ENCODE measurements at regions of chr7 and their contacts with region 1.

Region 1: GRCh38 chr7:155738652-155739537 is 73.4 kb downstream of the SHH start:
- DNase-seq: peak; percentile 40 to 80 (median 60)
- ATAC-seq: peak; percentile 93
- H3K4me3 ChIP-seq: no peak overlapping the region
- H3K4me3 Mint-ChIP-seq: peak overlapping the region; percentile 26
- H3K27ac ChIP-seq: no peak overlapping the region
- H3K27ac Mint-ChIP-seq: peak overlapping the region; percentile 64
- H3K4me1 ChIP-seq: peaks cover 10% of the 10 kb centered on the region
- H3K4me1 Mint-ChIP-seq: peaks cover 65% of the 10 kb centered on the region
- H3K27me3 ChIP-seq: no peaks in the 10 kb centered on the region
- H3K27me3 Mint-ChIP-seq: no peaks in the 10 kb centered on the region
- CTCF ChIP-seq: peak; percentile 67

Region 2: DNA sequence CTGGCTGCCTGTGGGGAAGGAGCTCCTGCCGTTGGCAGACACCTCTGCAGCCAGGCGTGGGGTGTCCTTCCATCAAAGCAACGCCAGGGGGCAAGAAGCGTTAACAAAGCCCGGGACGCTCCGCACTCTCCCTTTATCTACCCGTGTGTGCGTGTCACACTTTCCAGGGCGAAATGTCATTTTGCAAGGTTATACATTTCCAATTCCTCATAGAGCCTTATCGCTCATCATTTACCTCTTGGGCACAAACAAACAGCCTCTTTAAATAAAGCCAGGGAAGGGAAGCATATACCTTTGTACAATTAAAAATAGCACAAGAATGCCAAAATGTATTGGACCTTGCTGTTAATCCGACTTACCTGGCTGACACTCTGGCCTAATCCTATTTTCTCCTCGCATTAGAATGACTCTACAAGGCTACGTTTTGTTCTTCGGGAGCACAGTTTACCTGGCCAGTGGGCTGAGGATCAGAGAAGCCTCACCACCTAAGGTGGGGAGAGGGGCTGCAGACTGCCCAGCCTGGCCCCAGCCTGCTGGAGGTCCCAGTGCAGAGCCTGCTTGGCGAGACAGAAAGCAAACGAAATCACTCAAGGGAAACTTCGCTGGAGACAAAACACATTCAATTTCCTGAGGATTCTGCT is 358.6 kb before region 1 on chr7:
- CTCF ChIA-PET with region 1: no interaction called
- POLR2A ChIA-PET with region 1: no interaction called
- intact Hi-C with region 1: loop called in 1 of 2 experiments (anchors 2 kb)
- DNase-seq: peak; percentile 32 to 77 (median 50)
- ATAC-seq: peak; percentile 92
- H3K4me3 ChIP-seq: no peak overlapping the region
- H3K4me3 Mint-ChIP-seq: peak overlapping the region; percentile 23
- H3K27ac ChIP-seq: no peak overlapping the region
- H3K27ac Mint-ChIP-seq: no peak overlapping the region
- H3K4me1 ChIP-seq: peaks cover 27% of the 10 kb centered on the region
- H3K4me1 Mint-ChIP-seq: peaks cover 32% of the 10 kb centered on the region
- H3K27me3 ChIP-seq: peaks cover 69 to 94% of the 10 kb centered on the region in 2 experiments
- H3K27me3 Mint-ChIP-seq: peaks cover 94% of the 10 kb centered on the region
- CTCF ChIP-seq: peak; percentile 69

Region 3: DNA sequence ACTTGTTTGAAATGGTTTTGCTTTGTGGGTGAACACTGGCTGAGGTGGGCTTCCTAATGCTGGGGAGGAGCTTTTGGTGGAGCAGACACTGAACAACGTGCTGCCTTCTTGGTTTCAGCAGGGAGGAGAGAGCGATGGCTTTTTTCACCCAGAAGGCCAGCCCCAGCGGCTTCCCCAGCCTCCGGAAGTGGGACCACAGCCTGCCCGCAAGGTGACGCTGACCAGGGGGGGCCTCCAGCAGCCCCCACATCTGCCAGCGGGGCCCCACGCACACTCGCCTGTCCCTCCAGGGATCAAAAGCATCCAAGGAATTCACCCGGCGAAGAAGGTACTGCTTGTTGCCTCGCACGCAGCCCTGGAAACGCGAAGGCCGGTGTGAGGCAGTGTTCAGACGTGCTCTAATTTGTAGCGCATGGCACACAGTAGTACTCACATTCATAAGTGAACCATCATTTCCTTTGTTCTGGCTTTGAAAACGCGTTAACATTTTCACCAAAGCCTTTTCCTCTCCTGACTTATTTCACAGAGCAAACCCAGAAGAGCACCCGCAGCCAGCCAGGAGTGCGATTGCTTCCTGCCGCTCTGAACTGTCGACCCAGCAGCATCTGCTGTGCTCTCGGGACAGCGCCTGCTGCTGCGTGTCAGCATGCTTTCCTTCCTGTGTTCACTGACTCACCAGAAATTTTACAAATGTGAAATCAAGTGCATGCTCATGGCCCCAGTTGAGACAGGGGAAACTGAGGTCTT is 25.0 kb after region 1 on chr7:
- CTCF ChIA-PET with region 1: no interaction called
- POLR2A ChIA-PET with region 1: no interaction called
- intact Hi-C with region 1: loop called in 1 of 2 experiments (anchors 1 kb)
- DNase-seq: peak; percentile 24 to 79 (median 48)
- ATAC-seq: peak; percentile 85
- H3K4me3 ChIP-seq: peak overlapping the region; percentile 18
- H3K4me3 Mint-ChIP-seq: peak overlapping the region; percentile 84
- H3K27ac ChIP-seq: peak overlapping the region; percentile 57 to 67
- H3K27ac Mint-ChIP-seq: peak overlapping the region; percentile 84
- H3K4me1 ChIP-seq: peaks cover 36% of the 10 kb centered on the region
- H3K4me1 Mint-ChIP-seq: peaks cover 57% of the 10 kb centered on the region
- H3K27me3 ChIP-seq: no peaks in the 10 kb centered on the region
- H3K27me3 Mint-ChIP-seq: no peaks in the 10 kb centered on the region
- CTCF ChIP-seq: no peak

Measured in CD4-positive, alpha-beta T cell (primary cell).